HEK293 (cell line): ENCODE measurements at regions of chr19 and their contacts with region 1.

Region 1: GRCh38 chr19:16361254-16361653 is 36.6 kb downstream of the KLF2 start:
- H3K4me3 ChIP-seq: no peak overlapping the region
- H3K27ac ChIP-seq: no peak overlapping the region
- H3K4me1 ChIP-seq: no peaks in the 10 kb centered on the region
- CTCF ChIP-seq: no peak

Region 2: GRCh38 chr19:16376649-16377048 is 15.4 kb after region 1 on chr19:
- CTCF ChIA-PET with region 1: interaction called, 10 read pairs
- POLR2A ChIA-PET with region 1: no interaction called
- H3K4me3 ChIP-seq: no peak overlapping the region
- H3K27ac ChIP-seq: no peak overlapping the region
- H3K4me1 ChIP-seq: no peaks in the 10 kb centered on the region
- CTCF ChIP-seq: peak; percentile 44; the same call in 1 of the 2 replicates